ENCODE measurements at regions of chr6 and their contacts with region 1.

Region 1: DNA sequence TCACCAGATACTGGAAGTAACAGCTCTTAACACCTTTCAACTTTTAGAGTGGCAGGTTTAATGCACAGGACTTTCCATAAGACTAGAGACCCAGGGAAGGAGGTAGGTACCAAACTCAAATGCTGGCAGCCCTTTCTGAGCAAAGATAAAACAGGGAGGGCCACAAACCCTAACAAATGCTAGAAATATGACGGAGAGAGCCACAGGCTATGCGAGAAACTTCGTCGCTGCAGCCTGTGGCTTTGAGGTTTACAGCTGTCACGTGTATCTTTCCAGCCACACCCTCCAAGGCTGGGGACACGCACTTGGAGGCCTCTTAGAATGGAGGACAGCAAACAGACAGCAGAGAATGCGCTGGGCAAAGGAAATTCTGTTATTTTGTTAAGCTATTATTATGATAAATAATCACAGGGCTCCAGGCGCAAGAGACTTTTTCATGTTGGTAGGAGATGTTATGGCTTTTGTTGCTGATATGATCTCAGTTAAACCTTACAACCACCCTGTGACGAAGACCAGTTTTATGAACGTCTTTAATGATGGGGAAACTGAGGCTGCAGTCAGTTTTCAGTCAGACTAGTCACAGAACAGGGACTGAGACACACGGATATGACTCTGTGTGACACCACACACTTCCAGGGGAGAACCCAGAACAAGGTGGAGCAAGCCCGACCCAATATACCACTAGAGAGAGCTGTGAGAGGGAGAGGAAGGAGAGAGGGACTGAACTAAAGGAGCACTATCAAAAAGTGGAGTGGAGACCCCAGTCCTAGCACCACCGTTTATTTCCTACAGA is 2.0 kb downstream of the TRAM2 start:
- DNase-seq: peak; percentile 83
- H3K4me3 ChIP-seq: peak overlapping the region; percentile 84
- H3K27ac ChIP-seq: peak overlapping the region; percentile 80
- H3K4me1 ChIP-seq: peaks cover 3% of the 10 kb centered on the region
- H3K27me3 ChIP-seq: no peaks in the 10 kb centered on the region
- CTCF ChIP-seq: no peak

Region 2: DNA sequence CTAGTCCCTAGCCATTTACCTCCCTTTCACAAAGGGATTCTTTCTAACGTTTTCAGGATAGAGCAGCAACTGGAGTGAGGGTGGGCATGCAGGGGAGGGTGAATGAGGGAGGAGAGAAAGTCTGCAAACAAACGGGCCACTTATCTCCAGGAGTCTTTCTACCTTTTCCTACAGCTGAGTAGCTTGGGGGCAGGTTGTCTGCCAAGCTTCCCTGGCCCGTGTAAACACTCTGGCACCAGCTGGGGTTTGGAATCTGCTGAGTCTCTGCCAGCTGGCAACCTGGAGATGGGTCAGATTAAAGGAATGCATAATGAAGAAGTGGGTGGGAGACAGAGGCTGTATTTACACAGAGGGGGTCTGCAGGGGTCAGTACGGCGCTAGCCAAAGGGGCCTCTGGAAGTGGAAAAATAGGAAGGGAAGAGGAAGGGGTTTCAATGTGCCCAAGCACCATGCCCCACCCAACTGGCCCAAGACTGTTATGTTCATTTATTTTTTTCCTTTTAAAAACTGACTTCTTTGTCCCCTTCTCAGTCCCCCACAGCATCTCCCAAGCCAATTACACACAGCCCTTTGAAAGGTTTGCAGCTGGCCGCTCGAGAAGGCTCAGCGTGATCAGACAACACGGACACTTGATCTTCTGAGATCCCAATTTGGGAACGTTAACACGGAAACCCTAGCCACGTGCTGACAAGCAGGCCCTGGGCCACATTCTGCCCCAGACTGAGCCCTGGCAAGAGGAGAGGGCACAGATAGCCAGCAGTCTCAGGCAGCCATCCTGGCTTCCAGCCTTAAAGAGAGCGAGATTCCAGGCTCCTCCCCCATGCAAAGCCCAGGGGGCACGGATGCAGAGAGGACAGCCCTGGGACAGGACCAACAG is 23.3 kb before region 1 on chr6:
- intact Hi-C with region 1: loop called (anchors 1 kb)
- DNase-seq: peak; percentile 66
- H3K4me3 ChIP-seq: no peak overlapping the region
- H3K27ac ChIP-seq: peak overlapping the region; percentile 49
- H3K4me1 ChIP-seq: peaks cover 34% of the 10 kb centered on the region
- H3K27me3 ChIP-seq: no peaks in the 10 kb centered on the region
- CTCF ChIP-seq: no peak

Measured in colonic mucosa (tissue), 4 donors.